HepG2 (cell line): ENCODE measurements at regions of chr2 and their contacts with region 1.

Region 1: GRCh38 chr2:19020550-19021476 is 337.6 kb downstream of the OSR1 start:
- DNase-seq: peak; percentile 84
- ATAC-seq: peak; percentile 80
- H3K4me3 ChIP-seq: peak overlapping the region; percentile 27 to 63 (median 42); a peak in 5 of 6 replicates
- H3K27ac ChIP-seq: peak overlapping the region; percentile 52
- H3K4me1 ChIP-seq: peaks cover 29% of the 10 kb centered on the region
- H3K27me3 ChIP-seq: no peaks in the 10 kb centered on the region
- CTCF ChIP-seq: no peak
- EP300 ChIP-seq: no peak; a peak in 1 of 4 replicates
- POLR2A ChIP-seq: no peak
- RAD21 ChIP-seq: no peak

Region 2: GRCh38 chr2:18560031-18560796 is 460.6 kb before region 1 on chr2 and contains the start of gene RDH14:
- CTCF ChIA-PET with region 1: no interaction called
- POLR2A ChIA-PET with region 1: interaction called, 19 read pairs
- in situ Hi-C with region 1: no loop called
- intact Hi-C with region 1: loop called (anchors 1 kb)
- DNase-seq: peak; percentile 97
- ATAC-seq: peak; percentile 94
- H3K4me3 ChIP-seq: peak within 1 kb of the TSS; percentile 78 to 84 (median 83)
- H3K27ac ChIP-seq: peak within 1 kb of the TSS; percentile 87
- H3K4me1 ChIP-seq: peaks cover 27% of the 10 kb centered on the region
- H3K27me3 ChIP-seq: no peaks in the 10 kb centered on the region
- CTCF ChIP-seq: peak; percentile 35
- EP300 ChIP-seq: 0 out of 4 replicates have a peak, but pooled peaks of 1 of the 2 experiments have one; percentile 10
- POLR2A ChIP-seq: peak; percentile 70 to 74; a peak in 3 of 4 replicates
- RAD21 ChIP-seq: peak; percentile 79
- total RNA-seq, gene RDH14: 37.4 and 39.9 TPM in 2 replicates

Region 3: GRCh38 chr2:19009456-19009879 is 11.3 kb before region 1 on chr2:
- CTCF ChIA-PET with region 1: no interaction called
- POLR2A ChIA-PET with region 1: interaction called, 10 read pairs
- in situ Hi-C with region 1: no loop called
- intact Hi-C with region 1: no loop called
- DNase-seq: no peak
- ATAC-seq: no peak
- H3K4me3 ChIP-seq: no peak overlapping the region
- H3K27ac ChIP-seq: no peak overlapping the region
- H3K4me1 ChIP-seq: no peaks in the 10 kb centered on the region
- H3K27me3 ChIP-seq: no peaks in the 10 kb centered on the region
- CTCF ChIP-seq: no peak
- EP300 ChIP-seq: no peak
- POLR2A ChIP-seq: no peak
- RAD21 ChIP-seq: no peak

Region 4: GRCh38 chr2:19120941-19121750 is 100.3 kb after region 1 on chr2:
- CTCF ChIA-PET with region 1: no interaction called
- POLR2A ChIA-PET with region 1: no interaction called
- in situ Hi-C with region 1: no loop called
- intact Hi-C with region 1: loop called (anchors 5 kb)
- DNase-seq: peak; percentile 26
- ATAC-seq: peak; percentile 65
- H3K4me3 ChIP-seq: no peak overlapping the region
- H3K27ac ChIP-seq: no peak overlapping the region
- H3K4me1 ChIP-seq: peaks cover 27% of the 10 kb centered on the region
- H3K27me3 ChIP-seq: no peaks in the 10 kb centered on the region
- CTCF ChIP-seq: no peak
- EP300 ChIP-seq: no peak
- POLR2A ChIP-seq: no peak
- RAD21 ChIP-seq: no peak

Region 5: DNA sequence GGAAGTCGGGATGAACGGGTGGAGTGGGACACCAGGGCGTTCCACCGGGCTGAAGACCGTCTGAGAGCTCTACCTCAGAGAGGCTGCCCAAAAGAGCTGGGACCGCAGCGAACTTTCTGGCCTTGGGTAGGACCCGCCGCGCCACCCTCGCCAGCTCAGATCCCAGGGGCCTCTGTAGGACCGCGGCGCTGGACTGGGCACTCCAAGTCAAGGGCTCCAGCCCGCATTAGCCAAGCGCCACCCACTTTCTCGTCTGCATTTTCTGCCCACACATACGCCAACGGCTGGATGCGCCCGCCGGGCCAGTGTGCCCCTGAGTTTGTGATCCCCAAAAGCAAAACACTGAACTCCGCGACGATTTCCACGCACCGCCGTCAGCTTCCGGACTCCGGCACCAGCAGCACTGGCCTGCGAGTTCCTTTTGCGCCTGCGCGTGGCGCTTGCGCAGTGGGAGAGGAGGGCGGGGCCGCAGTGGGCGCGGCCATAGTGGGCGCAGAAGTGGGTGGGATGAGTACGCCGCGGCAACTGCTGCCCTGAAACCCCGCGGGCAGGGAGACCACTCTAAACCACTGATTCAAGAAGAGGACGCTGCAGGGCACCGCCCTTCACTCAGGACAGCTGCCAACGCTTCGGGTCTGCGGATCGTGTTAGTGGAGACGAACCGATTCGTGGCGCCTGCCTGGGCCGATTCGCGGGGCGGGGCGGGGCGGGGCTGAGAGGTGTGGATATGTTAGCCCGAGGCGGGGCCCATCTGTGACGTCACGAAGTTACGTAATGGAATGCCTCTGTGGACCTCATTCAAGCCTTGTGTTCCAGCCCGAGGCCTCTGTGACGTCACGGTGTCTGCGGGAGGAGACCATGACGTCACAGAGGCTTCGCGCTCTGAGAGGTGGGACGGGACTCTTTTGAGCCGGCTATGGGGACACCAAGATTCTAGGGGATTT is 327.1 kb after region 1 on chr2:
- CTCF ChIA-PET with region 1: no interaction called
- POLR2A ChIA-PET with region 1: interaction called, 20 read pairs
- in situ Hi-C with region 1: no loop called
- intact Hi-C with region 1: loop called (anchors 2 kb)
- DNase-seq: peak; percentile 92
- ATAC-seq: peak; percentile 87
- H3K4me3 ChIP-seq: peak overlapping the region; percentile 80 to 93 (median 86)
- H3K27ac ChIP-seq: peak overlapping the region; percentile 69
- H3K4me1 ChIP-seq: peaks cover 27% of the 10 kb centered on the region
- H3K27me3 ChIP-seq: no peaks in the 10 kb centered on the region; a peak in 1 of 5 replicates
- CTCF ChIP-seq: peak; percentile 17; the same call in 1 of the 2 replicates
- EP300 ChIP-seq: no peak
- POLR2A ChIP-seq: peak; percentile 97 to 99
- RAD21 ChIP-seq: peak; percentile 44

Region 6: GRCh38 chr2:19525313-19525712 is 504.5 kb after region 1 on chr2:
- CTCF ChIA-PET with region 1: no interaction called
- POLR2A ChIA-PET with region 1: no interaction called
- in situ Hi-C with region 1: no loop called
- intact Hi-C with region 1: no loop called
- DNase-seq: no peak
- ATAC-seq: no peak
- H3K4me3 ChIP-seq: no peak overlapping the region
- H3K27ac ChIP-seq: no peak overlapping the region
- H3K4me1 ChIP-seq: peaks cover 17% of the 10 kb centered on the region; the same call in 1 of the 2 replicates
- H3K27me3 ChIP-seq: no peaks in the 10 kb centered on the region; a peak in 2 of 5 replicates
- CTCF ChIP-seq: no peak
- EP300 ChIP-seq: no peak
- POLR2A ChIP-seq: no peak
- RAD21 ChIP-seq: no peak